CD4-positive, alpha-beta T cell (primary cell): ENCODE measurements at regions of chr6 and their contacts with region 1.

Region 1: DNA sequence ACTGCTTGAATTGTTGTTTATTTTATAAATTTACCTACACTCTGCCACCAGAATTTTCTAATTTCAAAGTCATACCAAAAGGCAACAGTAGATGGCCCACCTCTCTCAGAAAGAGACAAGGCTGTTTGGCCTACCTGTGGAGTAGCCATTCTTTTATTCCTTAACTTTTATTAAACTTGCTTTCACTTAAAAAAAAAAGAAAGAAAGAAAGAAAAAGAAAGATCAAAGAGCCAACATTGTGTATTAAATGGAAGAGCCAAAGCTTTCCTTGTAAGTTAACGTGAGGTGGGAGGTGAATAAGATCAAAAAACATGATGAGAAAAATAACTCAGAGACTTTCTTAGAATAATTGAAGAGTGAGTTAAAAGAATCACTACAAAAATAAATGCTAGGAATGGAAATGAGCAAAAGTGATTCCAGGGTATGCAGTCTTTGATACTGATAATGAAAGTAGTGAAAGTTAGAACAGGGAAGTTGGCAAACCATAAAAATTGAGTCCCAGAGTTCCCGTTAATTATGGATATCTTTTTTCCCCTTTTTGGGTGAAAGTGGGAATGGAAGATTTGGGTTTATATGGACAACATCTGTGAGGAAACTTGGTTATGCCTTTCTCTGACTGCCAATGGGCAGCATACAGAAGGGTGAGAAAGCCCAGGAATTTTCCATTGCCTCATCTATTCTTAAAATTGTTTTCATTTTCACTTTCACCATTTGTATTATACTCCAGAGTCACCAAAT is 35.9 kb upstream of the MYB start:
- DNase-seq: peak in 4 of 14 experiments; percentile 39 to 65 (median 61)
- ATAC-seq: peak; percentile 74
- H3K4me3 ChIP-seq: peak overlapping the region; percentile 15
- H3K4me3 Mint-ChIP-seq: peak overlapping the region; percentile 3
- H3K27ac ChIP-seq: no peak overlapping the region
- H3K27ac Mint-ChIP-seq: peak overlapping the region; percentile 6
- H3K4me1 ChIP-seq: no peaks in the 10 kb centered on the region
- H3K4me1 Mint-ChIP-seq: peaks cover 51% of the 10 kb centered on the region
- H3K27me3 ChIP-seq: no peaks in the 10 kb centered on the region
- H3K27me3 Mint-ChIP-seq: no peaks in the 10 kb centered on the region
- CTCF ChIP-seq: peak; percentile 83

Region 2: GRCh38 chr6:135114355-135115145 is 30.7 kb before region 1 on chr6:
- CTCF ChIA-PET with region 1: no interaction called
- POLR2A ChIA-PET with region 1: no interaction called
- intact Hi-C with region 1: no loop called
- DNase-seq: peak in 2 of 14 experiments; percentile 16 to 63
- ATAC-seq: no peak
- H3K4me3 ChIP-seq: no peak overlapping the region
- H3K4me3 Mint-ChIP-seq: no peak overlapping the region
- H3K27ac ChIP-seq: no peak overlapping the region
- H3K27ac Mint-ChIP-seq: no peak overlapping the region
- H3K4me1 ChIP-seq: peaks cover 18% of the 10 kb centered on the region
- H3K4me1 Mint-ChIP-seq: peaks cover 71% of the 10 kb centered on the region
- H3K27me3 ChIP-seq: no peaks in the 10 kb centered on the region
- H3K27me3 Mint-ChIP-seq: no peaks in the 10 kb centered on the region
- CTCF ChIP-seq: no peak

Region 3: DNA sequence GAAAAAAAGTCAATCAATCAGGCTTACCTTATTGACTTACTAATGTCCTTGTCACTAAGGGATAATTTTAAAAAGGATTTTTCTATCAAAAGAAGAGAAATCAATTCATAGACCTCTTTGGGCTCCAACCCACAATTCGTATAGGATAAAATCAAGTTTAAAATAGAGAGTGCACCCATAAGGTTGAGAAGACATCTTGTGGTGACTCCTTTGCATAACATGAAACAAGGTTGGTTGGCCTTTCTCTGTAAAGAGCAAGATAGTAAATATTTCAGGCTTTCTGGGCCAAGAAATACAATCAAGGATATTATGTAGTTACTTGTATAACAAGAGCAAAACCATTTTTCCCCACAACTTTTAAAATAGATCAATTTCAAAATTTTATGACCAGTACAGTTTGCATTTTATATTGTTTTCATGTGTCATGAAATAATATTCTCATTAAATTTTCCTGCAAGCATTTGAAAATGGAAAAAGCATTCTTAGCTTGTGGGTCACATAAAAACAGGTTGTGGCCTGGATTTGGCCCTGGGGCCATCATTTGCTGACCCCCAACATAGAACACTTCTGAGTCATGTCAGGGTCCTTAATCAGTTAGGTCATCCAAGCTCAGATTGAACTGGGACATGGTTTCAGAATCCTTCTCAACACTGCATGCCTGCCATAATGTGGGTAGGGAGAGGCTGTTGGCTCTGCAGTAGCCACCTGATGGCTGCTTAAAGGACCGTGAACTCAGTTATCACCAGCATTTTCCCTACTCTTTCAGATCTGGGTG is 112.6 kb after region 1 on chr6:
- CTCF ChIA-PET with region 1: no interaction called
- POLR2A ChIA-PET with region 1: no interaction called
- intact Hi-C with region 1: loop called (anchors 1 to 5 kb)
- DNase-seq: peak in 2 of 14 experiments; percentile 4 to 9
- ATAC-seq: no peak
- H3K4me3 ChIP-seq: no peak overlapping the region
- H3K4me3 Mint-ChIP-seq: no peak overlapping the region
- H3K27ac ChIP-seq: no peak overlapping the region
- H3K27ac Mint-ChIP-seq: no peak overlapping the region
- H3K4me1 ChIP-seq: no peaks in the 10 kb centered on the region
- H3K4me1 Mint-ChIP-seq: no peaks in the 10 kb centered on the region
- H3K27me3 ChIP-seq: no peaks in the 10 kb centered on the region
- H3K27me3 Mint-ChIP-seq: no peaks in the 10 kb centered on the region
- CTCF ChIP-seq: no peak

Region 4: GRCh38 chr6:135423649-135424128 is 278.5 kb after region 1 on chr6:
- CTCF ChIA-PET with region 1: no interaction called
- POLR2A ChIA-PET with region 1: no interaction called
- intact Hi-C with region 1: loop called (anchors 2 to 5 kb)
- DNase-seq: peak in 4 of 14 experiments; percentile 3 to 54 (median 48)
- ATAC-seq: peak; percentile 48
- H3K4me3 ChIP-seq: no peak overlapping the region
- H3K4me3 Mint-ChIP-seq: no peak overlapping the region
- H3K27ac ChIP-seq: no peak overlapping the region
- H3K27ac Mint-ChIP-seq: no peak overlapping the region
- H3K4me1 ChIP-seq: no peaks in the 10 kb centered on the region
- H3K4me1 Mint-ChIP-seq: no peaks in the 10 kb centered on the region
- H3K27me3 ChIP-seq: no peaks in the 10 kb centered on the region
- H3K27me3 Mint-ChIP-seq: no peaks in the 10 kb centered on the region
- CTCF ChIP-seq: peak; percentile 74

Region 5: DNA sequence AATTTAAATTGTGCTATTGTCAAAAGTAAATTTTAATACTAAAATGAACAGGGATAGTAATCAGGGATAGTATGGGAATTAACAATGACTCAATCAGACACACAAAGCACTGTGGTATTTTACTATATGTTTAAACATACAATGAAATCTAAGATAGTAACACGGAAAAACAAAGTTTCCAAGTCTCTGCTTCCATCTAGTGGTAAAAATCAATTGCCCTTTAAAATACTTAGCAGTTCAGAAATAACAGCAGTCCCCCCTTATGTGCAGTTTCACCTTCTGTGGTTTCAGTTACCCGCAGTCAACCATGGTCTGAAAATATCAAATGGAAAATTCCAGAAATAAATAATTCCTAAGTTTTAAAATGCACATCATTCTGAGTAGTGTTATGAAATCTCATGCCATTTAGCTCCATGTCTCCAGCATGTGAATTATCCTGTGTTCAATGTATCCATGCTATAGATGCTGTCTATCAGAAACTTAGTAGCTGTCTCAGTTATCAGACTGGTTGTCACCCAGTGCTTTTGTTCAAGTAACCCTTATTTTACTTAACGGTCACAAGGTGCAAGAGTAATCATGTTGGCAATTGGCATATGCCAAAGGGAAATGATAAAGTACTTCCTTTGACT is 293.8 kb after region 1 on chr6:
- CTCF ChIA-PET with region 1: no interaction called
- POLR2A ChIA-PET with region 1: no interaction called
- intact Hi-C with region 1: loop called in 1 of 2 experiments (anchors 5 kb)
- DNase-seq: peak in 3 of 14 experiments; percentile 40 to 50 (median 50)
- ATAC-seq: peak; percentile 44
- H3K4me3 ChIP-seq: no peak overlapping the region
- H3K4me3 Mint-ChIP-seq: peak overlapping the region; percentile 30
- H3K27ac ChIP-seq: no peak overlapping the region
- H3K27ac Mint-ChIP-seq: peak overlapping the region; percentile 68
- H3K4me1 ChIP-seq: no peaks in the 10 kb centered on the region
- H3K4me1 Mint-ChIP-seq: peaks cover 21% of the 10 kb centered on the region
- H3K27me3 ChIP-seq: no peaks in the 10 kb centered on the region
- H3K27me3 Mint-ChIP-seq: no peaks in the 10 kb centered on the region
- CTCF ChIP-seq: peak; percentile 57